ENCODE measurements at regions of chr2 and their contacts with region 1.

Region 1: GRCh38 chr2:238242731-238243495 is 3.1 kb upstream of the HES6 start:
- DNase-seq: no peak
- ATAC-seq: no peak
- H3K4me3 ChIP-seq: no peak overlapping the region
- H3K4me3 Mint-ChIP-seq: no peak overlapping the region
- H3K27ac ChIP-seq: no peak overlapping the region
- H3K27ac Mint-ChIP-seq: no peak overlapping the region
- H3K4me1 ChIP-seq: peaks cover 0 to 22% of the 10 kb centered on the region in 2 experiments
- H3K4me1 Mint-ChIP-seq: peaks cover 3 to 8% (median 5%) of the 10 kb centered on the region in 3 donors
- H3K27me3 ChIP-seq: peaks cover 3 to 15% of the 10 kb centered on the region in 2 experiments
- H3K27me3 Mint-ChIP-seq: no peaks in the 10 kb centered on the region

Region 2: GRCh38 chr2:237766340-237766739 is 476.6 kb before region 1 on chr2:
- CTCF ChIA-PET with region 1: no interaction called
- POLR2A ChIA-PET with region 1: interaction called in 1 of 2 experiments, 19 read pairs
- DNase-seq: no peak
- ATAC-seq: no peak
- H3K4me3 ChIP-seq: no peak overlapping the region
- H3K4me3 Mint-ChIP-seq: no peak overlapping the region
- H3K27ac ChIP-seq: no peak overlapping the region
- H3K27ac Mint-ChIP-seq: no peak overlapping the region
- H3K4me1 ChIP-seq: no peaks in the 10 kb centered on the region
- H3K4me1 Mint-ChIP-seq: peaks cover 0 to 6% (median 0%) of the 10 kb centered on the region in 3 donors
- H3K27me3 ChIP-seq: no peaks in the 10 kb centered on the region
- H3K27me3 Mint-ChIP-seq: no peaks in the 10 kb centered on the region

Measured in T-cell (primary cell).